A673 (cell line): ENCODE measurements at regions of chr12 and their contacts with region 1.

Region 1: DNA sequence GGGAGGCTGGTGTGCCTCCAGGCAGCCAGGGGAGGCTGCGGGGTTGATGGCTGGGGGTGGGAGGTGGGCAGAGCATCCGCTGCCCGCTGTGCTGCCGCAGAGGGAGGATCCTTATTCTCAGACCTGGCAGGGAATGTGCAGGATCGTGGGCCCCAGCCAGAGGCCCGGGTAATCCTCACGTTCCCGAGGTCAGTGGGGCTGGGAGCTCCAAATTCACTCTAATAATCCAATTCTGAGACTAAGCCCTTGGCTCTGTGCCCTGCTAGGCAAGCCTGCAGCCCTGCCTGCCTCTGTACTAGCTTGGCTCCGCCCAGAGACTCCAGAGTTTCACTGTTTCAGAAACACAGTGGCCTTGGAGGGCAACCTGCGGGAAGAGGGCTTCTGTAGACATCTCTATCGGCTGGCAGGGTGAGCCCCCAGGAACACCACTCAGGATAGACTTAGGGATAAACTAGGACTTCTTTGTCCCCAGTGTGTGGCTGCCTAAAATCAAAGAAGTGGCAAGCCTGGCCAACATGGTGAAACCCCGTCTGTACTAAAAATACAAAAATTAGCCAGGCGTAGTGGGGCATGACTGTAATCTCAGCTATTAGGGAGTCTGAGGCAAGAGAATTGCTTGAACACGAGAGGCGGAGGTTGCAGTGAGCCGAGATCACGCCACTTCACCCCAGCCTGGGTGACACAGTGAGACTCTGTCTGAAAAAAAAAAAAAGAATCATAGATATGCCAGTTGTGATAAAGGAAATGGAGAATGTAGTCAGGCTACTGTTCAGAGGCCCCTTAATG is 17.7 kb upstream of the MLEC start:
- DNase-seq: peak; percentile 88
- H3K4me3 ChIP-seq: no peak overlapping the region
- H3K27ac ChIP-seq: peak overlapping the region; percentile 63
- H3K4me1 ChIP-seq: peaks cover 15% of the 10 kb centered on the region
- H3K27me3 ChIP-seq: no peaks in the 10 kb centered on the region
- CTCF ChIP-seq: no peak

Region 2: DNA sequence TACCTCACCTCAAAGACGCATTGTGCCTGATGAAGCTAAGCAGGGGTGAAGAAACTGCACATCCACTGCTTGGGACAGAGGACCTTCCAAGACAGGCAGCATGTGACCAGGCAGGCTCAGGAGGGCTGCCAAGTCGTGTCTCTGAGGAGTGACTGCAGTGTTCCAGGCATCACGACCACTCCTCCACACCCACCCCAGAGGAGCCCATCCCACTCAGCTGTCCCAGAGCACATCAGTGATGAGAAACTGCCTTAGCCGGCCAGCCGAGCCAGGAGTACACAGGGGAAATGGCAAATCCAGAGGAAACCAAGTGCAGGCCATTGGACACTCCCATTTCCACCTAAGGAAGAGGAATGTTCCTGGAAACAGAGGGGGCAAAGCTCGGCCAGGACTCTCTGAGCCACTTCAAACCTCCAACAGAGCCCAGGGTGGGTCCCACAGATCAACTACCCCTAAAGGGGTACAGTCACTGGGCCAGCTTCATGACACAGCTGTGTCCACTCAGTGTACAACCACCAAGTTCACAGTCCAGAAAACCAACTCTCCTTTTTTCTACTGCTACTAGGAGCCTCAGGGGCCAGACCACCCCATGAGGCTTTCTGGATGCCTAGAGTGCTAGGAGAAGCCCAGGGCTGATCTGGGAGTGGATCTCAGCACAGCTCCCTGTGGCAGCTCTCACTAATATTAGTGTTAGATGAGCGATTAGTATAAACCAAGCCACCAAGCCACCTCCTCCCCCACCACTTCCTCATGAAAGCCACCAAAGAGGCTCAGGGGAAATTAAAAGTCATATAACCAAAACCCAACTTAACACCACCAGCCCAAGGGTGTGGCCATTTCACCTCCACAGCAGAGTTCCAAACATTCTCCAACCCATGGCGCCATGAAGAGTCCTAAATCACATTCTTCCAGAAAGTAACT is 419.1 kb before region 1 on chr12:
- CTCF ChIA-PET with region 1: no interaction called
- POLR2A ChIA-PET with region 1: interaction called, 13 read pairs
- intact Hi-C with region 1: no loop called
- DNase-seq: no peak
- H3K4me3 ChIP-seq: no peak overlapping the region
- H3K27ac ChIP-seq: no peak overlapping the region
- H3K4me1 ChIP-seq: peaks cover 20% of the 10 kb centered on the region
- H3K27me3 ChIP-seq: no peaks in the 10 kb centered on the region
- CTCF ChIP-seq: no peak

Region 3: DNA sequence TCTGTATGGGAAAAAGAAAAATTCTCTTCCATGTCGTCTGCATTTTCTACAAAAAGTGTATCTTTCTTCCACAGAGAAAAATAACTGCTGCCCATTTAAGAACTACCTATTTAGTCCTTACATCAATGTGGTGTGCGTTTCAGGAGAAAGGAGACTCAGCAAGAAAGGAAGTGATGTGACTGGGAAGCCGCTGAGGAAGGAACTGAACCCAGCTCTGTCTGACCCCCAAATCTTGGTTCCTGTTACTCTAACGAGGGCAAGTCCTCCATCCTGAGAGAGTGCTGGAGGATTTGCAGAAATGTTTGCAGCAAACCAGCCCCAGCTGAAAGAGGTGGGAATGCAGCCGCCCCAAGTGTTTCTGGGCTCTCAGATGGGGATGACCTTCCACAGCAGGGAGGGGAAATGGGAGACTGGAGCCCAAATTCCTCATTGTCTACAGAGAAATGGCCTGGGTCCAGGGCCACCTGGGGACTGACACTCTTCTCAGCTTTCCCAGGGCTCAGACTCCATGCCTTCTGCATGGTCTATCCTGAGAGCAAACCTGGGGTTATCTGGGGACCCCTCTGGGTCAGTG is 11.0 kb after region 1 on chr12:
- CTCF ChIA-PET with region 1: interaction called, 15 read pairs
- POLR2A ChIA-PET with region 1: no interaction called
- intact Hi-C with region 1: no loop called
- DNase-seq: no peak
- H3K4me3 ChIP-seq: no peak overlapping the region
- H3K27ac ChIP-seq: no peak overlapping the region
- H3K4me1 ChIP-seq: peaks cover 7% of the 10 kb centered on the region
- H3K27me3 ChIP-seq: no peaks in the 10 kb centered on the region
- CTCF ChIP-seq: no peak